ENCODE measurements at regions of chr2 and their contacts with region 1.

Region 1: GRCh38 chr2:106104332-106105062 is 89.6 kb downstream of the UXS1 start:
- DNase-seq: no peak
- ATAC-seq: peak; percentile 75
- H3K4me3 ChIP-seq: no peak overlapping the region
- H3K27ac ChIP-seq: no peak overlapping the region
- H3K4me1 ChIP-seq: peaks cover 16% of the 10 kb centered on the region
- H3K27me3 ChIP-seq: no peaks in the 10 kb centered on the region
- CTCF ChIP-seq: peak; percentile 81 to 97 (median 95)
- EP300 ChIP-seq: no peak
- POLR2A ChIP-seq: no peak
- RAD21 ChIP-seq: peak; percentile 99

Region 2: DNA sequence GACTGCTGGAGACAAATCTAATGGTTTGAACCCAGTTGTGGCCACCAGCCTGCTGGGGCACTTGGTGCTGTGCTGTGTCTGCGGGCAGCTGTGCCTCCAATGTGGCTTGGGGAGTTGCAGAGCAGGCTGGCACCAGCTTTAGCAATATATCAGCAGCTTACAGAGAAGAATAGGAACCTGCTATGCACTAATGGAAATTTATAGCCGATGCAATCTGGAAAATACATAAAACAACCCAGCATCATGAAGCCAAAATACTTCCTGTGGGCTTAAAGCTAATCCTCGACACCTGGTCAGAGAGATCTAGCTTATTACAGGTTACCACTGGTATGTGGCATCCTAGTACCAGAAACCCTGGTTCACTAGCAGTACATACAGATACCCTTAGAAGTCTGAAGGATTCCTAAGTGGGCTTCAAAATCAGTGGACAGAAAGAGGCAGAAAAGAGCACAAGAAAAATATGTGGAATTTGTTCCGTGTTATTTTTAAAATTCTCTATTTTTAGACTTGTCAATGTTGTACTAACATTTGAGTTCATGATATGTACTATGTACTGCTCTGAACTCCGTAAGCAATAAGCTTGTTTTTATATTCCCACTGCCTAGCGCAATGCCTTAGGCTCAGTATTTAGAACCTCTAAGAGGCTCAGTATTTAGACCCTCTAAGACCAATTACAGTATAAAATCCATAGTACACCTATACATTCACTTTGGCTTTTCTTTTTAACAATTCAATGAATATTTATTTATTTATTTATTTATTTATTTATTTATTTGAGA is 105.1 kb before region 1 on chr2:
- CTCF ChIA-PET with region 1: no interaction called
- POLR2A ChIA-PET with region 1: no interaction called
- RAD21 ChIA-PET with region 1: no interaction called
- SMC1A ChIA-PET with region 1: no interaction called
- in situ Hi-C with region 1: no loop called
- intact Hi-C with region 1: no loop called
- DNase-seq: no peak
- ATAC-seq: no peak
- H3K4me3 ChIP-seq: no peak overlapping the region
- H3K27ac ChIP-seq: no peak overlapping the region
- H3K4me1 ChIP-seq: no peaks in the 10 kb centered on the region
- H3K27me3 ChIP-seq: no peaks in the 10 kb centered on the region
- CTCF ChIP-seq: no peak
- EP300 ChIP-seq: no peak
- POLR2A ChIP-seq: no peak
- RAD21 ChIP-seq: no peak

Region 3: GRCh38 chr2:106073678-106074406 is 30.7 kb before region 1 on chr2:
- CTCF ChIA-PET with region 1: no interaction called
- POLR2A ChIA-PET with region 1: no interaction called
- RAD21 ChIA-PET with region 1: no interaction called
- SMC1A ChIA-PET with region 1: no interaction called
- in situ Hi-C with region 1: no loop called
- intact Hi-C with region 1: no loop called
- DNase-seq: no peak
- ATAC-seq: no peak
- H3K4me3 ChIP-seq: no peak overlapping the region
- H3K27ac ChIP-seq: no peak overlapping the region
- H3K4me1 ChIP-seq: no peaks in the 10 kb centered on the region
- H3K27me3 ChIP-seq: peaks cover 0 to 6% of the 10 kb centered on the region in 2 experiments; a peak in 3 of 4 replicates
- CTCF ChIP-seq: no peak
- EP300 ChIP-seq: no peak
- POLR2A ChIP-seq: no peak
- RAD21 ChIP-seq: no peak

Region 4: DNA sequence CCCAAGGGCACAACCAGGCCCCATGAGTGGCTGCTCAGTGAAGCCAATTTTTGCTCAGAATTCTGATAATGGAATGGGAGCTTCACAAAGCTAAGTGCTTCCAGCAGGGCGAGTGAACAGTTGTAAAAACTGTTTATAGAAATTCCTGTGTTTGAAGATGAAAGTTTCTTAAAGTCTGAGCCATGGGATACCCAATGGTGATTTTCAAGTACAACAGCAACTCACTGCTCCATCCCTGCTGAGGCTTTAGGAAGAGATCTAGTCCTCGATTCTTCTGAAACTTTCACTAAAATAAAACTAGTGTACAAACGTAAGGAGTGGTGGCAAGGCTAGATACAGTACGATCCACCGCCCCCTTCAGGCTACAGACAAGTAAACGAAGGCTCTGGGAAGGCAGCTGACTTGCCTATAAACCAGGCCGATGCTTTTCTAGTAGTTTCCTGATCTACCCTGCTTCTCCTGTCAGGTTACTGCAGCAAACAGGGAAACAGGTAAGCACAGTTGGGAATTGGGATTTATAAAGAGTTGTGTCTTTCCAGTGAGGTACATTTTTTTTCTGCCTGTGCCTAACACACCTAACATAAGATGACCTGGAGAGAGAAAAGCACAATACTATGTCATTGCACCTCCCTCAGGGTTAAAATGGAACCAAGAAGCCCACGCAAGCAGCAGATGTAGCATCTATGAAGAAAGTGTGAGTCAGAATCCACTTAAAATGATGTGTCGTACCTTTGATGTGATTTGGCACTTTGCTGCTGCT is 19.1 kb before region 1 on chr2:
- CTCF ChIA-PET with region 1: interaction called, 10 read pairs
- POLR2A ChIA-PET with region 1: no interaction called
- RAD21 ChIA-PET with region 1: interaction called, 3 read pairs
- SMC1A ChIA-PET with region 1: no interaction called
- in situ Hi-C with region 1: no loop called
- intact Hi-C with region 1: no loop called
- DNase-seq: no peak
- ATAC-seq: peak; percentile 89
- H3K4me3 ChIP-seq: no peak overlapping the region
- H3K27ac ChIP-seq: no peak overlapping the region
- H3K4me1 ChIP-seq: no peaks in the 10 kb centered on the region
- H3K27me3 ChIP-seq: no peaks in the 10 kb centered on the region
- CTCF ChIP-seq: peak; percentile 34 to 46 (median 42); a peak in 4 of 6 replicates
- EP300 ChIP-seq: no peak
- POLR2A ChIP-seq: no peak
- RAD21 ChIP-seq: peak; percentile 52; the same call in 1 of the 2 replicates

Region 5: DNA sequence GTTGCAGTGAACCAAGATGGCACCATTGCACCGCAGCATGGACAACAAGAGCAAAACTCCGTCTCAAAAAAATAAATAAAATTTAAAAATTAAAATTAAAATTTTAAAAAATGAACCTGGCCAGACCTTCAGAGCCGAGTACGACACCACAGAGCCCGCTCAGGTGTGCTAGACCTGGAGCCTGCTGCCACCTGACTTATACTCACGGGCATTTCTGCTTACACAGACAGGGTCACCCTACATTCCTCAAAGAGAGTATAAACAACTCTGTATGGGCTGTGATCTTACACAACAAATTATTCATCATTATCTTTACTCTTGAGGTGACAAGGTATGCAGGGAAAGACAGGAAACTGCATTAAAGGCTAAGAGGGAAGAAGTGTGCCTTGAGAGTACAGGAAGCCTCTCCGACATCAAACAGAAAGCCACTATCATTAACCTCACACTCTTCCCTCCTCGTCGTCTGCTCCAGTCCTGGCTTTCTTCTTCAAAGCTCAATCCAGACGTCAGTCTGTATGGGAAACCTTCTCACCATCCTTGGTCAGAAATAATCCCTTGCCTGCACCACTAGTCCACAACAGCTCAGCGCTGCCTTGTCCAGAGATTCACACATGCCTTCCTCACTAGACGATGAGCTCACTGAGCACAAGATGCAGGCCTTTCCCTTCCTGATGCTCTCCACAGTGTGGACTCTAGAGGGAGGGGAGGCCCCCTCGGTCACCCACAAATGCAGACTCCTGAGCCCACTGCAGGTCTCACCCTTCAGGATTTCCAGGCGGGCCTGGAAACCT is 33.4 kb after region 1 on chr2:
- CTCF ChIA-PET with region 1: no interaction called
- POLR2A ChIA-PET with region 1: no interaction called
- RAD21 ChIA-PET with region 1: no interaction called
- SMC1A ChIA-PET with region 1: no interaction called
- in situ Hi-C with region 1: no loop called
- intact Hi-C with region 1: no loop called
- DNase-seq: no peak
- ATAC-seq: no peak
- H3K4me3 ChIP-seq: no peak overlapping the region
- H3K27ac ChIP-seq: no peak overlapping the region
- H3K4me1 ChIP-seq: peaks cover 19% of the 10 kb centered on the region
- H3K27me3 ChIP-seq: no peaks in the 10 kb centered on the region
- CTCF ChIP-seq: no peak
- EP300 ChIP-seq: no peak
- POLR2A ChIP-seq: no peak
- RAD21 ChIP-seq: no peak

Region 6: GRCh38 chr2:106165029-106165428 is 60.5 kb after region 1 on chr2:
- CTCF ChIA-PET with region 1: no interaction called
- POLR2A ChIA-PET with region 1: no interaction called
- RAD21 ChIA-PET with region 1: no interaction called
- SMC1A ChIA-PET with region 1: no interaction called
- in situ Hi-C with region 1: no loop called
- intact Hi-C with region 1: no loop called
- DNase-seq: no peak
- ATAC-seq: no peak
- H3K4me3 ChIP-seq: no peak overlapping the region
- H3K27ac ChIP-seq: peak overlapping the region; percentile 13; the same call in 1 of the 2 replicates
- H3K4me1 ChIP-seq: peaks cover 16% of the 10 kb centered on the region
- H3K27me3 ChIP-seq: no peaks in the 10 kb centered on the region
- CTCF ChIP-seq: no peak
- EP300 ChIP-seq: no peak
- POLR2A ChIP-seq: no peak
- RAD21 ChIP-seq: no peak

Region 7: DNA sequence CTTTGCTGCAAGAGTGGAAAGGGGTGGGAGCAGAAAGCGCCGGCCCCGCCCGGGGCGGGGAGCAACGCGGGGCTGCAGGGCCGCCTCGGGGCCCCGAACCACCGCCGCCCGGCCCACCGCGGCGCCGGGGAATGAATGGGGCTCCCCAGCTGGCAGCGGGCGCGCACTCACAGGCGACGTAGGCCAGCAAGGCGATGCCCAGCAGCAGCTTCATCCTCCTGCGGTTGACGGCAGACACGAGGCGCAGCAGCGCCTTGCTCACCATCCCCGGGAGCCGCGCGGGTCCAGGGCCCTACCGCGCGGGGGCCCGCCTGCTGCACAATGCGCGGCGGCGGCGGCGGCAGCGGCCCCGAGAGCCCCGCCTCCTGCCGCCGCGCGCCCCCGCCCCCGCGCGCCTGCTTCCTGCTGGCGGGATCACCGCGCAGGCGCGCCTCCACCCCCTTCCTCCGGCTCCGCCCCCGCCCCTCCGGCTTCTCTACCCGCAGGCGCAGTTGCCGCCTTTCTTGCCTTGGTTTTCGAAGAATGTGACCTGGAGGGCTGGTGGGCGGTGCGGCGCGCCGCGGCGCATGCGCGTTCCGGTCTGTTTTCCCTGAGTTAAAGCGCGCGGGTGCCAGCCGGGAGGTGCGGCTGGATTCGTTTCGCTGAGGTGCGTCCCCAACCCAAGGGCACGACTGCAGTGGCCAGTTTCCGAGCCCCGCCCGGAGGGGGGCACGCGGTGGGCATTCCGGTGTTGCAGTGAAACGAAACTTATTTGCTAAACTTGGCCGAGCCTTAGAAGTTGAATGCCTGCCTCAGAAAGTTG is 89.7 kb after region 1 on chr2 and contains the start of gene UXS1:
- CTCF ChIA-PET with region 1: interaction called, 3 read pairs
- POLR2A ChIA-PET with region 1: interaction called, 3 read pairs
- RAD21 ChIA-PET with region 1: interaction called, 10 read pairs
- SMC1A ChIA-PET with region 1: interaction called, 9 read pairs
- in situ Hi-C with region 1: no loop called
- intact Hi-C with region 1: loop called (anchors 2 kb)
- DNase-seq: peak; percentile 78
- ATAC-seq: peak; percentile 78
- H3K4me3 ChIP-seq: peak within 1 kb of the TSS; percentile 92
- H3K27ac ChIP-seq: peak within 1 kb of the TSS; percentile 69
- H3K4me1 ChIP-seq: peaks cover 9% of the 10 kb centered on the region
- H3K27me3 ChIP-seq: no peaks in the 10 kb centered on the region
- CTCF ChIP-seq: 0 out of 6 replicates have a peak, but pooled peaks of 1 of the 3 experiments have one; percentile 7
- EP300 ChIP-seq: no peak; a peak in 1 of 4 replicates
- POLR2A ChIP-seq: peak; percentile 92
- RAD21 ChIP-seq: no peak
- polyA plus RNA-seq, gene UXS1: 6.0 to 10.5 TPM

Region 8: DNA sequence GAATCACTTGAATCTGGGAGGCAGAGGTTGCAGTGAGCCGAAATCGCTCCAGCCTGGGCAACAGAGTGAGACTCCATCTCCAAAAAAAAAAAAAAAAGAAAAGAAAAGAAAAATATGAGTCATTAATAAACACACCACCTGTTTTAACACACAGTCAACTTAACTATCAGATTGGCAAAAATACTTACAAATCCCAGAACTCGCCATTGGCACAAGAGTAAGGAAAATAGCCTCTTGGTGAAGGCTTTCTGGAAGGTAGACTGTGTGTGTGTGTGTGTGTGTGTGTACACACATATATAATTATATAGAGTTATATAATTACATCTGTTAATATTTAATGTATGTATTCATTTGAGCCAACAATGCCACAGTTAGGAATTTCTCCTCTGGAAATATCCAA is 153.3 kb after region 1 on chr2:
- CTCF ChIA-PET with region 1: no interaction called
- POLR2A ChIA-PET with region 1: no interaction called
- RAD21 ChIA-PET with region 1: no interaction called
- SMC1A ChIA-PET with region 1: no interaction called
- in situ Hi-C with region 1: no loop called
- intact Hi-C with region 1: loop called (anchors 10 kb)
- DNase-seq: no peak
- ATAC-seq: no peak
- H3K4me3 ChIP-seq: no peak overlapping the region
- H3K27ac ChIP-seq: no peak overlapping the region
- H3K4me1 ChIP-seq: no peaks in the 10 kb centered on the region
- H3K27me3 ChIP-seq: no peaks in the 10 kb centered on the region
- CTCF ChIP-seq: no peak
- EP300 ChIP-seq: no peak
- POLR2A ChIP-seq: no peak
- RAD21 ChIP-seq: no peak

Region 9: GRCh38 chr2:106537047-106537446 is 432.6 kb after region 1 on chr2:
- CTCF ChIA-PET with region 1: interaction called, 16 read pairs
- POLR2A ChIA-PET with region 1: no interaction called
- RAD21 ChIA-PET with region 1: interaction called, 18 read pairs
- SMC1A ChIA-PET with region 1: interaction called, 11 read pairs
- in situ Hi-C with region 1: loop called (anchors 5 kb)
- intact Hi-C with region 1: loop called (anchors 1 kb)
- DNase-seq: peak; percentile 7
- ATAC-seq: peak; percentile 65
- H3K4me3 ChIP-seq: no peak overlapping the region
- H3K27ac ChIP-seq: no peak overlapping the region
- H3K4me1 ChIP-seq: no peaks in the 10 kb centered on the region
- H3K27me3 ChIP-seq: no peaks in the 10 kb centered on the region; a peak in 1 of 4 replicates
- CTCF ChIP-seq: no peak
- EP300 ChIP-seq: no peak
- POLR2A ChIP-seq: no peak
- RAD21 ChIP-seq: no peak

Region 10: DNA sequence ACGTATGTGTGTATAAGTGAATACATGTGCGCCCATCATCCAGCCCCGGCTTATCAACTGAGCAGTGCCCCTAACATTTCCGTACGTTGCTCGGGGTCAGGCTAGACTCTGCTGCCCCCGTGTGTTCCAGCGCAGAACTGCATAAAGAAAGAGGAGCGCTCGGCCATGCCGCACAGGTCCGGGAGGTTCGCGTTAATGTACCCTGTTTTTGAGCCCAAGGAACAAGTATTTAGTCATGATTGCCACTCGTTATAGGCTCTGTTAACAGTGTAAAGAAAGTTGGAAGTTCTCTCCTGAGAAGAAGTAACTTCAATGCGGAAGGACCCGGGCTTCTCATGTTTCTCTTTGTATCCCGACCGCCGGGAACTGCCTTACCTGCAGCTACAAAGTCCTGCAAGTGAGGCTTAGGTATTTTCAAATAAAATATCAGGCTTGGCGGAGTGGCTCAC is 438.3 kb after region 1 on chr2:
- CTCF ChIA-PET with region 1: interaction called, 30 read pairs
- POLR2A ChIA-PET with region 1: no interaction called
- RAD21 ChIA-PET with region 1: interaction called, 18 read pairs
- SMC1A ChIA-PET with region 1: interaction called, 11 read pairs
- in situ Hi-C with region 1: loop called (anchors 5 kb)
- intact Hi-C with region 1: loop called (anchors 1 kb)
- DNase-seq: peak; percentile 5
- ATAC-seq: peak; percentile 99
- H3K4me3 ChIP-seq: no peak overlapping the region
- H3K27ac ChIP-seq: no peak overlapping the region
- H3K4me1 ChIP-seq: no peaks in the 10 kb centered on the region
- H3K27me3 ChIP-seq: peaks cover 1 to 4% of the 10 kb centered on the region in 2 experiments; a peak in 2 of 4 replicates
- CTCF ChIP-seq: peak; percentile 78 to 91 (median 82)
- EP300 ChIP-seq: no peak
- POLR2A ChIP-seq: no peak
- RAD21 ChIP-seq: peak; percentile 87

Region 11: GRCh38 chr2:106582148-106583143 is 477.9 kb after region 1 on chr2:
- CTCF ChIA-PET with region 1: interaction called, 12 read pairs
- POLR2A ChIA-PET with region 1: no interaction called
- RAD21 ChIA-PET with region 1: interaction called, 3 read pairs
- SMC1A ChIA-PET with region 1: interaction called, 3 read pairs
- in situ Hi-C with region 1: no loop called
- intact Hi-C with region 1: loop called (anchors 2 kb)
- DNase-seq: no peak
- ATAC-seq: peak; percentile 89
- H3K4me3 ChIP-seq: no peak overlapping the region; the same call in 1 of the 2 replicates
- H3K27ac ChIP-seq: no peak overlapping the region
- H3K4me1 ChIP-seq: no peaks in the 10 kb centered on the region
- H3K27me3 ChIP-seq: no peaks in the 10 kb centered on the region; a peak in 1 of 4 replicates
- CTCF ChIP-seq: peak; percentile 83 to 88 (median 85)
- EP300 ChIP-seq: no peak
- POLR2A ChIP-seq: no peak
- RAD21 ChIP-seq: peak; percentile 69

Measured in GM12878 (cell line).